Activated B cell treated with CpG ODN at 0.5 μM for 24 hours (primary cell): ENCODE measurements at regions of chr6 and their contacts with region 1.

Region 1: DNA sequence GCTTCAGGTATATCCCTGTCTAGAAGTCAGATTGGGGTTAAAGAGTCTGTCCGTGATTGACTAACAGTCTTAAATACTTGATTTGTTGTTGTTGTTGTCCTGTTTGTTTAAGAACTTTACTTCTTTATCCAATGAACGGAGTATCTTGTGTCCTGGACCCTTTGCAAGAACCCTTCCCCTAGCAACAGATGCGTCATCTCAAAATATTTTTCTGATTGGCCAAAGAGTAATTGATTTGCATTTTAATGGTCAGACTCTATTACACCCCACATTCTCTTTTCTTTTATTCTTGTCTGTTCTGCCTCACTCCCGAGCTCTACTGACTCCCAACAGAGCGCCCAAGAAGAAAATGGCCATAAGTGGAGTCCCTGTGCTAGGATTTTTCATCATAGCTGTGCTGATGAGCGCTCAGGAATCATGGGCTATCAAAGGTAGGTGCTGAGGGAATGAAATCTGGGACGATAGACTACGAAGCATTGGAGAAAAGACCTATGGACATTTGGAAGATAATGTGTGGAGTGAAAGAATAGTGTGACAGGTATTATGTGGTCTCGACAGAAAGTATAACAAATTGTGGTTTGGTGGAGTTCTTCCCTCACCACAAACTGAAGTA is at the start of gene HLA-DRA:
- DNase-seq: no peak
- ATAC-seq: peak; percentile 72
- H3K4me3 Mint-ChIP-seq: peak within 1 kb of the TSS; percentile 96
- H3K27ac Mint-ChIP-seq: peak within 1 kb of the TSS; percentile 98
- H3K4me1 Mint-ChIP-seq: peaks cover 80% of the 10 kb centered on the region
- H3K27me3 Mint-ChIP-seq: no peaks in the 10 kb centered on the region
- CTCF ChIP-seq: no peak
- total RNA-seq, gene HLA-DRA: 2,835 and 3,035 TPM in 2 replicates

Region 2: DNA sequence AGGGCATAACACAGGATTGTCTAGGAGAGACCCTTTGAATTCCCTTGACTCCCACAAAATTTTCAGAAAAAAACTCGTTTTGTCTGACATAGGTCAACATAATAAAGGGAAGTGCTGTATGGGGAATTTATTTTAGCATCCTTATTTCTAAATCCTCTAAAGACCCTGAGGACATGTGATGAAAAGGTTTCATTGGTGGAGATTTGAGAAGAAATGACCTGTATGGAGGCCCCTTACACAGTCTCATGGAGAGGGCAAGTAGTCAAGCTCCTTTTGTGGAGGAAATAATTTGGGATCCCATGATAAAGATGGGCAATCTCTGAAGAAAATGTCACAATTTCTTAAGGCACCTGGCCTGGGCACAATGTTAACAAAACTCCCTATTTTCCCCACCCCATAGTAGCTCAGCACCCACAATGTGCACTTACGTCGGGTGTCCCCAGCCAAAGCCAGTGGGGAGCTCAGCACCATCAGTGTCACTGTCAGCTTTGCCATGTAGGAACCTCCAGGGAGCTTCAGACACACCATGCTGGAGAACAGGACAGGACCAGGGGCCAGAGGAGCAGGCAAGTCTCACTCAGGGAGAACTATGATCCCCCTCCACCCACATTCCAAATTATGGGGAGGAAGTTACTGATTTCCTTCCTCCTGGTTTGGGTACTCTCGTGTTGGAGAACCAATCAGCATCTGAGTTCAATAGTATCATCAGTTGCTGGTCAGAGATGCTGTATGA is 90.2 kb after region 1 on chr6 and contains the start of gene HLA-DRB5:
- CTCF ChIA-PET with region 1: no interaction called
- POLR2A ChIA-PET with region 1: interaction called, 13 read pairs
- intact Hi-C with region 1: loop called (anchors 5 kb)
- DNase-seq: peak; percentile 20
- ATAC-seq: peak; percentile 76
- H3K4me3 Mint-ChIP-seq: peak within 1 kb of the TSS; percentile 92
- H3K27ac Mint-ChIP-seq: peak within 1 kb of the TSS; percentile 99
- H3K4me1 Mint-ChIP-seq: peaks cover 28% of the 10 kb centered on the region
- H3K27me3 Mint-ChIP-seq: no peaks in the 10 kb centered on the region
- CTCF ChIP-seq: no peak
- total RNA-seq, gene HLA-DRB5: 196 and 199 TPM in 2 replicates

Region 3: DNA sequence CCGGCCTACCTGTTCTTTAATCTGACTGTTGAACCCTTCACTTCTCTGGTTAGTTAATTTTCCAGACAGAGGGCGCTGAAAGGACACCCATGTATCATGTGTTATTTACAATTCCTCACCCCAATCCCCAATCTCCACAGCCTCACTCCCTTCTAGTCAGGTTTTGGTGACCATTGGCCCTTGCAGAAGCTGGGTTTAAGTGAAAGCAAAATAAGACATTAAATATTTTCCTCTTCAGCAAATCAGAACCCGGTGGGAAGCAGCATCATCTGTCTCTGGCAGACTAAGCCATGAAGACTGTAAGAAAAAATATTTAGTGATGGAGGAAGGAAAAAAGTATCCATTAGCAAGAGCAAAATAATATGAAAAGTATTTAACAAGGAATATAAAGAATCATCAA is 188.1 kb after region 1 on chr6:
- CTCF ChIA-PET with region 1: interaction called, 6 read pairs
- POLR2A ChIA-PET with region 1: interaction called, 80 read pairs
- intact Hi-C with region 1: loop called (anchors 1 kb)
- DNase-seq: peak; percentile 33
- ATAC-seq: peak; percentile 61
- H3K4me3 Mint-ChIP-seq: peak overlapping the region; percentile 86
- H3K27ac Mint-ChIP-seq: peak overlapping the region; percentile 100
- H3K4me1 Mint-ChIP-seq: peaks cover 89% of the 10 kb centered on the region
- H3K27me3 Mint-ChIP-seq: no peaks in the 10 kb centered on the region
- CTCF ChIP-seq: no peak

Region 4: DNA sequence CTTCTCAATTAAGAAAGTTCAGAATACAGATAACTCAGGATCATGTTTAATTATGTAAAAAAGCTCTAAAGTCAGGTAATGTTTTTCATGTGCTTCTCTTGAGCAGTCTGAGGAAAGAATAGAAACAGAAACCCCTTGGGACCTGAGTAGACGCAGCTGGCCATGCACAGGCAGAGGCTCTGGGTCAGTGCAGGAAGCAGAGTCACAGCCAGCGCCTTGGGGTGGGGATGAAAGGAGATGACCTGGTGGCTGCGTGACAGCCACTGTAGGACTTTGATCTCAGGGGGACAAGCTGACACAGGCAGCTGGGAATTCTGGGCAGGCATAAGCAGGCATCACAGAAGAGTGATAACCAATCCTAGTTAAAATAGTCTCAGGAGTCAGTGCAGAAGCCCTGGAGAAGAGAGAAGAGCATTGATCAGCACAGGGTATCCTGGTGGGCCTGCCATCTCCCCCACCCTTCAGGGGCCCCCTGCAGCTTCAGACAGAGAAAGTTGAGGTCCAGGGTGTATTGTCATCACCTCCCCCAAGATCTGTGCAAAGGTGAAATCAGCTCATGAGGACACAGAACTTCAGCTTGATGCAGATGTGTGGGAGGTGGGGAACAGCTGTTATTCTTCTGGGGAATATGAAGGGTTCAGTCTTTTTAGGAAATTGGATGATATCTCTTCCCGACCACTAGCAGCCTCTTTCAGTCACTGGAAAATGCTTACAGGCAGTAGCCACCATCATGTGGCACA is 220.3 kb after region 1 on chr6:
- CTCF ChIA-PET with region 1: no interaction called
- POLR2A ChIA-PET with region 1: interaction called, 81 read pairs
- intact Hi-C with region 1: no loop called
- DNase-seq: no peak
- ATAC-seq: peak; percentile 83
- H3K4me3 Mint-ChIP-seq: peak overlapping the region; percentile 65
- H3K27ac Mint-ChIP-seq: peak overlapping the region; percentile 93
- H3K4me1 Mint-ChIP-seq: peaks cover 66% of the 10 kb centered on the region
- H3K27me3 Mint-ChIP-seq: no peaks in the 10 kb centered on the region
- CTCF ChIP-seq: no peak

Region 5: DNA sequence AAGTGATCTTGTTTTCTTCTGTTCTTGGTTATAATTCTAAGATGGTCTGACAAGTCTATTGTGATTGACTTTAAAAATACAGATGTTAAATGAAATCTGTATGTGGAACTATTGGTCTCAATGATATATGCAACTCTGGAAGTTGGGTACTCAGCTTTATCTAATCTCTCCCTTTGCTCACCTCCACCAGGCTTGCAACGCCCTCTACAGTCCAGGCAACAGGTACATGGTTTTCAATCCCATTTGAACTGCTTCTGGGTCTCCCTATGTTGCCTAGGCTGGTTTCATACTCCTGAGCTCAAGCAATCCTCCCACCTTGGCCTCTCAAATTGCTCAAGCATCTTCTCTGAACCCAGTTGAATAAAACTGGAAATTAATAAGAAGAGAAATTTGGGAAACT is 252.3 kb after region 1 on chr6:
- CTCF ChIA-PET with region 1: interaction called, 5 read pairs
- POLR2A ChIA-PET with region 1: interaction called, 90 read pairs
- intact Hi-C with region 1: no loop called
- DNase-seq: no peak
- ATAC-seq: peak; percentile 49
- H3K4me3 Mint-ChIP-seq: peak overlapping the region; percentile 3
- H3K27ac Mint-ChIP-seq: peak overlapping the region; percentile 85
- H3K4me1 Mint-ChIP-seq: peaks cover 54% of the 10 kb centered on the region
- H3K27me3 Mint-ChIP-seq: no peaks in the 10 kb centered on the region
- CTCF ChIP-seq: no peak